ENCODE measurements at regions of chr3 and their contacts with region 1.

Region 1: DNA sequence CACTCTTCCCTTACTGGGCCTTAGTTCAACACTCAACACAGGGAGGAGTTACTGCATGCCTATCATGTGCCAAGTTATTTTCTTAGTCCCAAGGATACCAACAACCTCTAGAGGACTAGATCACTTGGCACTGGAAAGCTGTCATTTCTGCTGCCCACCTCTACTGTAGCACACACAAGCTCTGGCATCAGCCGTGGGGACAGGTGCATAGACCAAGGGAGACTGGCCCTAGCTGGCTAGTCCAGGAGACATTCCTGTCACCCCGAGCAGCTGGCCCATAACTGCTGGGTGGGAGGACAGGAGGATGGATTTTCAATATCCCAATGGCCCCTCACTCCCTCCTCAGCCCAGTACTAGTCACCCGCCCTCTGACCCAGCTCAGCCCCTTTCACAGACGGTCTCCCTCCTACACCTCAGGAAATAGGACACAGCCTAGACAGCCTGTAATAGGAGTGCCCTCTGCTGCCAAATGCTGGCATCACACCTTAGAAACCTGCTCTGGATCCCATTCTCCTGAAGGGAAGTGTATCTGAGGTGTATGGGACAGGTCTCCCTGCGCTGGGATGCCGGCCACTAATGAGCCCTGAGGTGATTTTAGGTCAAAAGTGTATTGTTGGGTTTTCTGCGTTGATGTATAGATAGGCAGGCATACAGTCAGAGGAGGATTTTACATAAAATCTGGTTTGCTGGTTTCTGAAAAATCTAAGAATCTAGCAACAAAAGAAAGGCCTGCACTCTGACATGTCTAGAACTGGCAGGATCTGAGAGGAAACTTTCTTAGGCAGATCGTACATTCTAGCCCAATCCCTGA is 3.4 kb upstream of the DZIP1L start:
- DNase-seq: no peak
- H3K4me3 ChIP-seq: no peak overlapping the region
- H3K27me3 ChIP-seq: no peaks in the 10 kb centered on the region
- CTCF ChIP-seq: peak; percentile 88

Region 2: DNA sequence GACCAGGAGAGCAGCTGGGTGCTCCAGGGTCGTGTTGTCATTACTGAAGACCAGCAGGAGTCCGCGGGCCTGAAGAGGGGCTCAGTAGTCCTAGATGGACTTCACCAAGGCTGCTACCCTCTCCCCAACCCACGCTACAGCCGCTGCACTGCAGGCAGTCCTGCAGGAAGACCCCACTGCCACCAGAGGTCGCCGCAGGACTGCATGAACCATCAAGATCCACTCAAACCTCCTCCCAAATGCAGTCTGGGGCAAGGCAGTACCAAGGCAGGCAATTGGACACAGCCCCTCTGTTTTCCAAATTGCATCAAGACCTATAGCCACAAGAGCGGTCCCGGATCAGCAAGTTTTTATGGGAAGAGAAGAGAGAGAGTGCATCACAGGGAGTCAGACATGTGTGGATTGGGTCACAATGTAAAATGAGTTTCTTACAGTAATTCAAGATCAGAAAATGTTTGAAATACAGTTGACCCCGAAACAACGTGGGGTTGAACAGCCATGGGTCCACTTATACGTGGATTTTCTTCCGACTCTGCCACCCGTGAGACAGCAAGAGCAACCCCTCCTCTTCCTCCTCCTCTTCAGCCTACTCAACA is 50.1 kb before region 1 on chr3:
- CTCF ChIA-PET with region 1: interaction called, 311 read pairs
- POLR2A ChIA-PET with region 1: no interaction called
- DNase-seq: no peak
- H3K4me3 ChIP-seq: no peak overlapping the region
- H3K27me3 ChIP-seq: no peaks in the 10 kb centered on the region
- CTCF ChIP-seq: peak; percentile 98

Region 3: GRCh38 chr3:138082085-138082991 is 36.5 kb before region 1 on chr3:
- CTCF ChIA-PET with region 1: interaction called, 30 read pairs
- POLR2A ChIA-PET with region 1: interaction called, 4 read pairs
- DNase-seq: peak; percentile 72
- H3K4me3 ChIP-seq: peak overlapping the region; percentile 14
- H3K27me3 ChIP-seq: no peaks in the 10 kb centered on the region
- CTCF ChIP-seq: no peak

Region 4: GRCh38 chr3:138092023-138092422 is 26.8 kb before region 1 on chr3:
- CTCF ChIA-PET with region 1: interaction called, 13 read pairs
- POLR2A ChIA-PET with region 1: interaction called, 5 read pairs
- DNase-seq: no peak
- H3K4me3 ChIP-seq: no peak overlapping the region
- H3K27me3 ChIP-seq: no peaks in the 10 kb centered on the region
- CTCF ChIP-seq: no peak

Region 5: DNA sequence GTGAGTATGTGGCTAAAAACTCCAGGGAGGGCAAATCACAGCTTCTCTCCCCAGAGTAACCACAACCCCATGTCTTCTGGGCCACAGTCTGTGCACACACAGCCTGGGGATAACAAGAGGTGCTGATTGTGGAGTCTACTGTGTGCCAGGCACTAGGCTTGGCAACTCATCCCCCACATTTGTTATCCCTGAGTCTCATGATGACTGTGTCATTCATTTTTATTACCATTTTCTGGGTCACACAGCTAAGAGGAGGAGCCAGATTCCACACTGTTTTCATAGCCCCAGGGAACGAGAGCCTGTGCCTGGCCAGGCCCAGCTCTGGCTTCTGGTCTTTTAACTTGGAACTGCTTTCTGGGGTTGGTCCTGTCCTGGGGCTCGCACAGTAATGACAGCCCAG is 350.1 kb after region 1 on chr3:
- CTCF ChIA-PET with region 1: no interaction called
- POLR2A ChIA-PET with region 1: no interaction called
- DNase-seq: peak; percentile 51
- H3K4me3 ChIP-seq: no peak overlapping the region
- H3K27me3 ChIP-seq: no peaks in the 10 kb centered on the region
- CTCF ChIP-seq: no peak

Region 6: GRCh38 chr3:139213936-139214335 is 1095.1 kb after region 1 on chr3:
- CTCF ChIA-PET with region 1: no interaction called
- POLR2A ChIA-PET with region 1: no interaction called
- DNase-seq: no peak
- H3K4me3 ChIP-seq: no peak overlapping the region
- H3K27me3 ChIP-seq: peaks cover 3% of the 10 kb centered on the region; the same call in 1 of the 2 replicates
- CTCF ChIP-seq: no peak